Caco-2 (cell line): ENCODE measurements at regions of chr9 and their contacts with region 1.

Region 1: DNA sequence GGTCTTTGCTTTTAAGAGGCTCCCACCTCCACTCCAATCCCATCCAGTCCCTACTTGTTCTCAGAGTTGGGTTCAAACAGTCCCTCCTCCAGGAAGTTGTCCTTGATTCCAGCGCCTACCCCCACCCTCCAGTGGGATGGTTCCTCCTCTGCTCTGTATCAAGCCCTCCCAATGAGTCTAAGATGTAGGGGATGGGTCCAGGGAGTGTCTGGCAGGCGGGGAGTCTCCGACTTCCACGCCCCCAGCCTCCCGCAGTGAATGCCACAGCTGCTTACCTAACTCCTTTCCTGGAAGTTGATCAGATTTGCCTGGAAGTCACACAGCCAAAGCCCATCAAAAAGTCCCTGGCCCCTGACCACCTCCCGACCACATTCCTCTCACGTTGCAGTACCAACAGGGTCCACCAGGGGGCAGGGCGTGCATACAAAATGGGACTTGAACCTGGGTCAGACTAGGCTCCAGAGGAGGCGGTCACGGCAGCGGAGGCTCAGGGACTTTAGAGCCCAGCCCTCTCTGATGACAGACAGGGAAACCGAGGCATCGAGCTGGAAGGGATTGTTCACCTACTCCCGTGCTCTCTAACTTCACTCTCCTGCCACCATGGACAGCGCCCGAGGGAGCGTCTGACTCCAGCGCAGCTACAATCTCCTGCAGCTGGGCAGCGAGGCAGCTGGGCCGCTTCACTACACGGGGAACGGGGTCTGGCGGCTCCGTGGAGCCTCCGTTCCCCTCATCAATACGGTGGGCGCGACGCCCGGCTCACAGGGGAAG is 25.0 kb upstream of the TDRD7 start:
- DNase-seq: peak; percentile 79 to 81
- H3K4me3 ChIP-seq: no peak overlapping the region
- H3K4me3 Mint-ChIP-seq: no peak overlapping the region
- H3K27ac Mint-ChIP-seq: peak overlapping the region; percentile 89
- H3K4me1 ChIP-seq: peaks cover 70% of the 10 kb centered on the region
- H3K4me1 Mint-ChIP-seq: peaks cover 55% of the 10 kb centered on the region
- H3K27me3 ChIP-seq: no peaks in the 10 kb centered on the region
- H3K27me3 Mint-ChIP-seq: no peaks in the 10 kb centered on the region
- CTCF ChIP-seq: peak; percentile 91 to 97

Region 2: GRCh38 chr9:96818535-96818934 is 568.4 kb before region 1 on chr9:
- CTCF ChIA-PET with region 1: no interaction called
- POLR2A ChIA-PET with region 1: no interaction called
- intact Hi-C with region 1: no loop called
- DNase-seq: no peak
- H3K4me3 ChIP-seq: no peak overlapping the region
- H3K4me3 Mint-ChIP-seq: no peak overlapping the region
- H3K27ac Mint-ChIP-seq: no peak overlapping the region
- H3K4me1 ChIP-seq: no peaks in the 10 kb centered on the region
- H3K4me1 Mint-ChIP-seq: no peaks in the 10 kb centered on the region
- H3K27me3 ChIP-seq: no peaks in the 10 kb centered on the region
- H3K27me3 Mint-ChIP-seq: no peaks in the 10 kb centered on the region
- CTCF ChIP-seq: no peak

Region 3: DNA sequence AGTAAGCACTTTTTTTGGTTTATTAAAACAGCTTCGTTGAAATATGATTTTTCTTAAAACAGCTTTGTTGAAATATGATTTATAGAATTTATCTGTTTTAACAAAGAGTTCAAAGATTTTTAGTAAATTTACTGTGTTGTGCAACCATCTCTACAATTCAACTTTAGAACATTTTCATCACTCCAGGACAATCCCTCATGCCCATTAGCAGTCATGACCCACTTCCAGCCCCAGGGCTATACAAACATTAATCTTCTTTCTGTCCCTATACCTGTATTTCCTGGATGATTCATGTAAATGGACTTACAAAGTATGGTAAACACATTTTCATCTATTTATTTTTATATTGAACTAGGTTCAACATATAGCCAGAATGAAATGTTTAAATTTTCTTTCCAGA is 207.3 kb before region 1 on chr9:
- CTCF ChIA-PET with region 1: no interaction called
- POLR2A ChIA-PET with region 1: no interaction called
- intact Hi-C with region 1: no loop called
- DNase-seq: no peak
- H3K4me3 ChIP-seq: no peak overlapping the region
- H3K4me3 Mint-ChIP-seq: no peak overlapping the region
- H3K27ac Mint-ChIP-seq: no peak overlapping the region
- H3K4me1 ChIP-seq: no peaks in the 10 kb centered on the region
- H3K4me1 Mint-ChIP-seq: no peaks in the 10 kb centered on the region
- H3K27me3 ChIP-seq: no peaks in the 10 kb centered on the region
- H3K27me3 Mint-ChIP-seq: no peaks in the 10 kb centered on the region
- CTCF ChIP-seq: no peak

Region 4: GRCh38 chr9:97366889-97367288 is 20.0 kb before region 1 on chr9:
- CTCF ChIA-PET with region 1: no interaction called
- POLR2A ChIA-PET with region 1: no interaction called
- intact Hi-C with region 1: no loop called
- DNase-seq: no peak
- H3K4me3 ChIP-seq: no peak overlapping the region
- H3K4me3 Mint-ChIP-seq: no peak overlapping the region
- H3K27ac Mint-ChIP-seq: no peak overlapping the region
- H3K4me1 ChIP-seq: no peaks in the 10 kb centered on the region
- H3K4me1 Mint-ChIP-seq: no peaks in the 10 kb centered on the region
- H3K27me3 ChIP-seq: no peaks in the 10 kb centered on the region
- H3K27me3 Mint-ChIP-seq: no peaks in the 10 kb centered on the region
- CTCF ChIP-seq: no peak

Region 5: GRCh38 chr9:97398999-97399758 is 12.3 kb after region 1 on chr9:
- CTCF ChIA-PET with region 1: interaction called, 11 read pairs
- POLR2A ChIA-PET with region 1: no interaction called
- intact Hi-C with region 1: no loop called
- DNase-seq: peak in 1 of 2 experiments; percentile 22
- H3K4me3 ChIP-seq: no peak overlapping the region
- H3K4me3 Mint-ChIP-seq: no peak overlapping the region
- H3K27ac Mint-ChIP-seq: peak overlapping the region; percentile 5
- H3K4me1 ChIP-seq: peaks cover 2% of the 10 kb centered on the region
- H3K4me1 Mint-ChIP-seq: no peaks in the 10 kb centered on the region
- H3K27me3 ChIP-seq: no peaks in the 10 kb centered on the region
- H3K27me3 Mint-ChIP-seq: no peaks in the 10 kb centered on the region
- CTCF ChIP-seq: peak; percentile 66 to 78

Region 6: GRCh38 chr9:97406620-97407177 is 19.8 kb after region 1 on chr9:
- CTCF ChIA-PET with region 1: interaction called, 11 read pairs
- POLR2A ChIA-PET with region 1: no interaction called
- intact Hi-C with region 1: loop called (anchors 1 kb)
- DNase-seq: peak in 1 of 2 experiments; percentile 47
- H3K4me3 ChIP-seq: no peak overlapping the region
- H3K4me3 Mint-ChIP-seq: peak overlapping the region; percentile 11
- H3K27ac Mint-ChIP-seq: peak overlapping the region; percentile 82
- H3K4me1 ChIP-seq: peaks cover 35% of the 10 kb centered on the region
- H3K4me1 Mint-ChIP-seq: peaks cover 36% of the 10 kb centered on the region
- H3K27me3 ChIP-seq: no peaks in the 10 kb centered on the region
- H3K27me3 Mint-ChIP-seq: no peaks in the 10 kb centered on the region
- CTCF ChIP-seq: no peak